Posterior vena cava (tissue), 2 donors: ENCODE measurements at regions of chr10 and their contacts with region 1.

Region 1: DNA sequence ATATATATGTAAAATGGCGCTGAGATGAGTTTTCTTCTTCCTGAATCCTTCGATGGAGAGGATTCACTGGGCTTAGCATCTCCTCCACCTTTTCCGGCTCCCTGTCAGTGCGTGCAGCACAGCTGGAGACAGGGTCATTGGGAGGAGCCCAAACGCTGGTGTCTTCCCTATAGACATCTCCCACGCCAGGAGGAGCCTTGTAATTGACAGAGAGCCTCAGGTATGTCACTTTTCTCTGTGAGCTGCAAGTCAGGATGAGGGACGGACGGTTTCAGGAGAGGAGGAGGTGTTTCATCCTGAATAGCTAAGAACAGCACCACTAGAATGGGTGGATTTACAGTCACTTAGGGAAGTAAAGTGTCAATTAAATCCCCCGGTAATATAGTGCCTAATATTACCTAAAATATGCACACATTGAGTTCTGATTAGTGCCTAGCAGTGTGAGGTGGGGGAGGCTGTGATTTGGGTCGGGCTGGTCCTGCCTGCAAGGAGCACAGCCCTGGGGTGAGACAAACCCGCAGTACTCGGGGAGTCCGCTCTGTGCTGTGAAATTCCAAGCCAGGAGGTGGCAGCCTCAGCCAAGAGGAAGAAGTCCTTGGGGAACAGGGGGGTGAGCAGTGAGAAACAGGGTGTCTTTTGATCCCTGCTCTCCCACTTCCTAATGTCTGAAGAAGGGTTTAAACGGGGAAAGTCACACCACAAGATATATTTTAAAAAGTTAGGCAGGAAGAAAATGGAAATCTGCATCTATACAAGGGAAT is 28.2 kb downstream of the IL15RA start:
- DNase-seq: peak; percentile 81

Region 2: GRCh38 chr10:5905854-5906507 is 43.2 kb before region 1 on chr10:
- intact Hi-C with region 1: loop called in 1 of 2 experiments (anchors 1 kb)
- DNase-seq: no peak

Region 3: DNA sequence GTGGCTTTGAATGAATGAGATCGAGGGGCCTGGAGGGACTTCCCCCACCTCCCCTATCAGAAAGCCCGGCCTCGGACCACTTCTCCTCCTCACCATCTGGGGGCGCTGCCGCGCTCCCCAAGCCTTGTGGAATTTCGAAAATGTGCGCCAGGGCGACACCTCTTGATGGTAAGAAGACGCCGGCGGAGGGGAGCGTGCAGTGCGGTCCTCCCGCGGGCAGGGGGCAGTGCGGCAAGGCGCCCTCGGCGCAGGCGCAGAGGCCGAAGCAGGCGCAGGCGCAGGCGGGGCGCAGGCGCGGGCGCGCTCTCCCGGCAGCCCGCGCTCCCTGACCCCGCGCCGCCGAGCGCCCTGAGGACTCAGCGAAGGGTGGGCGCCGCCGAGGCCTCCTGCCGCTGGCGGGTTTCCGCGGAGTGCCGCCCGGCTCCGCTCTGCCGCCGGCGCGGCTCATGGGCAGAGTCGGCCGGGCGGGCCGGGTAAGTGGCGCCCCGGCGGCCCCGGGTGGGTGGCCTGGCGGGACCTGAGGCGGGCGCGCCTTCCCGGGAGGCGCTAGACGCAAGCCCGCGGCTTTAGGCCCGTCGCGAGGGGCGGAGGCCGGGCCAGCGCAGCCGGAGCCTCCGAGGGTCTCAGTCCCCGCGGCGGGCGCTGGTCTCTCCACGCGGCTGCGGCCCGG is 139.7 kb after region 1 on chr10 and contains the start of gene RBM17:
- intact Hi-C with region 1: loop called in 1 of 2 experiments (anchors 10 kb)
- DNase-seq: peak; percentile 99
- total RNA-seq, gene RBM17: 58.9 to 68.3 TPM

Region 4: DNA sequence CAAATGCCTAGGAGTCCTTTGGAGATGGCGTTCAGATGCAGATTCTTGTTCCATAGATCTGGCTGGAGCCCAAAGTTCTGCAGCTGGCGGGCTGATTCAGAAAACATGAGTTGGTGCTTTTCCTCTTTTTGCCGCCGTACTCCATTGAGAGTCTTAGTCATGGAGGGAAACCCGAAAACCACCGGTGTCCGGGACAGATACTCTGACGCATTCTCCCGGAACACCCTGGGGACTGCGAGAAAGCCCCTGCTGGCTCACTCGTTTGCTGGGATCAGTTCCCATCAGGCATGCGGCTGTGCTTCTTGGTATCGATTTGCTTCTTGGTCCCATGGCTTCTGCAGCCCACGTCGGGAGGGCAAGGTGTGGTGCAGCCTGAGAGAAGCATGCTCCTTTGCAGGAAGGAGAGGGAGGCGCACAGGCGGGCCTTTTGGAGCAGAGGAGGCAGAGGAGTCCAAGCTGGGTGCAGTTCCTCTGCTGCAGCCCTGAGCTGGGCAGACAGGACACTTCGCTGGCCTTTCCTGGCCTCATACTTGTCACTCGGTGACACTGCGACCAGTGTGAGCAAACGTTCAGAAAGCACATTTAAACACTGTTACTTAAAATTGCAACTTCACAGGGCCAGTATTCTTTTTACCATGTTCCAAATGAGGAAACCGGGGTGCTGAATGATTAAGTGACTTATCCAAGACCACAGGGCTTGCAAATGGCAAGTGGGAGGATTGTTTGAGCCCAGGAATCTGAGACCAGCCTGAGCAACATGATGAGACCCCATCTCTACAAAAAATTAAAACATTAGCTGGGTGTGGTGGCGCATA is 222.9 kb after region 1 on chr10:
- intact Hi-C with region 1: loop called in 1 of 2 experiments (anchors 5 kb)
- DNase-seq: peak; percentile 91